ENCODE measurements at regions of chr7 and their contacts with region 1.

Region 1: DNA sequence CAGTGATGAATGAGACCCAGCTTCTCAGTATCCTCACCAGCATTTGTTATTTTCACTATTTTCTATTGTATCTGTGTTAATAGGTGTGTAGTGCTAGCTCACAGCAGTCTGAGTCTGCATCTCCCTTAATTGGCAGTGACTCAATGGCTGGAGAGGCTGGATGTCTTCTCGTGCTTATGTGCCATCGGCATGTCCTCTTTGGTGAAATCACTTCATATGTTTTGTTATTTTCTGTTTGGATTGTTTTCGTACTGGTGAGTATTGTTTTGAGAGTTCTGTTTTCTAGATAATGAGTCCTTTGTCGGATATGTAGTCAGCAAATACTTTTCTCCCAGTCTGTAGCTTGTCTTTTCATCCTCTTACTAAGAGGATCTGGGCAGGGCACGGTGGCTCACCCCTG is 66.1 kb downstream of the AMZ1 start:
- DNase-seq: no peak
- ATAC-seq: no peak
- H3K4me3 ChIP-seq: no peak overlapping the region
- H3K27ac ChIP-seq: peak overlapping the region; percentile 98
- H3K4me1 ChIP-seq: peaks cover 56% of the 10 kb centered on the region
- H3K27me3 ChIP-seq: no peaks in the 10 kb centered on the region
- CTCF ChIP-seq: no peak

Region 2: GRCh38 chr7:2771274-2771731 is 17.2 kb after region 1 on chr7:
- CTCF ChIA-PET with region 1: no interaction called
- POLR2A ChIA-PET with region 1: no interaction called
- in situ Hi-C with region 1: no loop called
- intact Hi-C with region 1: no loop called
- DNase-seq: no peak
- ATAC-seq: no peak
- H3K4me3 ChIP-seq: no peak overlapping the region
- H3K27ac ChIP-seq: no peak overlapping the region
- H3K4me1 ChIP-seq: no peaks in the 10 kb centered on the region
- H3K27me3 ChIP-seq: no peaks in the 10 kb centered on the region
- CTCF ChIP-seq: no peak

Region 3: DNA sequence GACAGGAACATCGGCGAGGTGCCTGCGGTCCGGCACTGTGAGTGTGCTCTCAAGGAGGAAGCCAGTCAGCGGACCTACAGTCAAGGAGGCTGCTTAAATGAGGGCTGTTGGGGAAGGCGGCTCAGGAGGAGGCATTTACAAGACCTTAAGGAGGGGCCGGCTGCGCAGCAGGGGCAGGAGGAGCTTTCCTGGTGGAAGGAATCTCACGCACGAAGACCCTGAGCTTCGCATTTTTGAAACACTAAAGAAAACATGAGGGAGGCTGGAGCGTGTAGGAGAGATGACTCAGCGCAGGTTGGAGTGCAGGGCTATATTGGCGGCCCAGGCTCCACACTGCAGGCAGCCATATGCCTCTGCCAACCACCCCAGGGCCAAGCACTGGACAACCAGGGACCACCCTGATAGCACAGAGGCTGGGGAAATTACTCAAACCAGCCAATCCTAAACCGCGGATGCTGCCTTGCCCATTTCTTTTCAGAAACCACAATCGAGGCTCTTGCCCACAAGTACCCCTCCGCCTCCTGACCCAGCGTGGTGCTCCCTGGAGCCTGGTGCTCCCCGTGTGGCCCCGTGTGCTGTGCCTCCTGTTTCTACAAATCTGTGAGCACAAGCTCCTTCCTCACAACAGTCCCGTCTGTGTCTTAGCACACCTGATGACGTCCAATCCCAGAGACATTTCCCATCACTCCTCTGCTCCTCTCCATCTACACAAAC is 61.2 kb after region 1 on chr7:
- CTCF ChIA-PET with region 1: no interaction called
- POLR2A ChIA-PET with region 1: interaction called, 12 read pairs
- in situ Hi-C with region 1: no loop called
- intact Hi-C with region 1: no loop called
- DNase-seq: no peak
- ATAC-seq: peak; percentile 43
- H3K4me3 ChIP-seq: no peak overlapping the region
- H3K27ac ChIP-seq: peak overlapping the region; percentile 83
- H3K4me1 ChIP-seq: peaks cover 73% of the 10 kb centered on the region
- H3K27me3 ChIP-seq: no peaks in the 10 kb centered on the region
- CTCF ChIP-seq: no peak